ENCODE measurements at regions of chr5 and their contacts with region 1.

Region 1: DNA sequence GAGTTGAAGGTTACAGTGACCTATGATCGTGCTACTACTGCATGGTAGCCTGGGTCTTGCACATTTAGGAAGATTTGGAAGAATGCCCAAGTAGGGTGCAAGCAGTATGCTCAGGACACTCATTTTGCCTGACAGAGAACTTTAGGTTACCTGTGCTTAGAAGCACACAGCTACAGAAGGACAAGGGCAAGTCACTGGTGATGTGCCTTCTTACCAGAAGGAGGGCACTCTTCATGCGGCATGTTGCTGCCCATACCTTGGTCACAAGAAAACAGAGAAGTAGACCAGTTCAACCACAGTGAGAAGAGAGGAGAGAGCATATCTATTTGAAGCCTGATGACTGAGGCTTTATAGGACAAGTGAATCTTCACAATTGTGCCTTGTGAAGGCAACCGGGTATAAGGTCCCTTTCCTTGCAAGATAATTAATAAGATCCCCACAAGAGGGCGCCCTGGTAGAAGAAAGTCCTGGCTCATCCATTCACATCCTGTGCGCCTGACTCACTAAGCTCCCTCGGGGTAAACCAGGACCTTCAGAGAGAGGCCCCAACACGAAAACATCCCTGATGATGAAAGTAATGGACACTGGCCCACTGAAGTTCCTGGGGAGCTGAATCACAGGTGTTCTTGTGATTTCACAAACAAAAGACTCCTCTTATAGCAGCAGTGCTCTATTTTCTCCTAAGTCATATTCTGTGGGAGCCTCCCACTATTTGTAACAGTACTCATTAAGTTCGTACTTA is 38.1 kb upstream of the STARD4 start:
- DNase-seq: peak; percentile 78
- ATAC-seq: peak; percentile 94
- H3K4me3 Mint-ChIP-seq: no peak overlapping the region
- H3K27ac Mint-ChIP-seq: no peak overlapping the region
- H3K4me1 Mint-ChIP-seq: peaks cover 12% of the 10 kb centered on the region
- H3K27me3 Mint-ChIP-seq: peaks cover 13% of the 10 kb centered on the region

Region 2: DNA sequence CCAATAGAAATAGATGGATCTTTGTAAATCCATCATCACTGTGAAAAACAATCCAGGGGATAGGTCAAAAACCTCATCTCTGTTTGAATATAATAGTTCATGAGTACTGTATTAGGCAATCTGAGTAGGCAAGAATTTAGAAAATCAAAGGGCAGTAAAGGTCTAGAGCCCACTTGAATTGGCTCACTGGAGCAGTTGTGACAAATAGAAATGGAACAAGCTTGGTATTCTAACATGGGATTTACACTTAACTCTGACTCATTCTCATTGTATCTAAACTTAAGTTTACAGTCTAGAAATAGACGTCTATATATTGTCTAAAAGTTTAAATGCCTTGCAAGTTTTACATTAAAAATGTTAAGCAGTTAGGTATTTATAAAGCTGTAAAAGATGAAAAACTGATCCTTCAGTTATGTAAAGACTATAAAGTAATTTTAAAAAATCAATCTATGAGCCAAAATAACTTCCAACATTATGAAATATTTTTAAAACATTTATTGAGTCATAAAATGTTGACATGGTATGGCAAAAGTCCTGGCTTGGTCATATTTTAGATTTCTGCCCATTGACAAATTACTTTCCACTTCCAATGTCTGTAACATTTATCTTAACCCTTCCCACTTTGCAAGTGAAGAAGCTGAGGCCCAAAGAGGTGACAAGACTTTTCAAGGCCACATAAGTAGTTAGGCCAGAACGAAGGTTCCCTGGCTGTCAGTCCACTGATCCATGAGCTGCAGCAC is 410.2 kb after region 1 on chr5:
- CTCF ChIA-PET with region 1: no interaction called
- DNase-seq: no peak
- ATAC-seq: no peak
- H3K4me3 Mint-ChIP-seq: no peak overlapping the region
- H3K27ac Mint-ChIP-seq: no peak overlapping the region
- H3K4me1 Mint-ChIP-seq: no peaks in the 10 kb centered on the region
- H3K27me3 Mint-ChIP-seq: no peaks in the 10 kb centered on the region

Region 3: DNA sequence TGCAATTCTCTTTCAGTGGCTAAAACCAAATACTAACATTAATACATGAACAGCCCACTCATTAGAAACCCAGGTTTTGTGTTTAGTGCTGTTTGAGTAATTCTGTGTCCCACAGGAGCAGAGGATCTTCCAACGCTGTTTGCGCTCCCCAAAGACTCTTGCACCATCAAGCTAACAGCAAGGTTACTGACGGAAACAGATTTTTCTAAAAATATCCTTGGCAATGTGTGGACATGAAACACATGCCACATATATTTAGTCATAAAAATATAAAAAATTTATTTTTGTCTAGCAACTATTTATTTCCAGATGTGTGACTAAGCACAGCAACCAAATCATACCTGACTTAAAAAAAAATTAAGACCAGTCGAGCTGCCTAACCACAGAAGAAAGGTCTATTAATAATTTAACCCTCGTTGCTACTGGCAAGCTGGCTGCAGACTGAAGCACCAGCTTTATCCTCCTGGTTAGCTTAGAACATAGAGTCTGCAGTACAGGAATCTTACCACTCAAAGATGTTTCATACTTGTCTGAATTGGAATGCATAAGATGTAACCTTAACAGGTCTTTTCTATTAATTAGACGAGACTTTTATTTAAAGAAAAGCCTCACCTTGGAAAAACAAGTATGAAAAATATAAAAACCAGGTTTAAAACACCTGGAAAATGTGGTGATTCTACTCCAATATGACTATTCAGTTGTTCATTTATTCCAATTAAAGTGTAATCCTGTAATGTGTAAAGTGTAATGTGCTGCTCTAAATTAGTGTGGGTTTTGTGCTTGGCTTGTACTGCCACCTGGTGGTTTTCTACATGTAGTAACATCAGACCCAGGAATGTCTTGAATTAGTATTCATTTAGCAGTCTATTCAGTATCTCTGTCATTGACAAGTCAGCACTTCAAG is 596.1 kb after region 1 on chr5:
- CTCF ChIA-PET with region 1: interaction called, 15 read pairs
- DNase-seq: peak; percentile 70
- ATAC-seq: peak; percentile 90
- H3K4me3 Mint-ChIP-seq: no peak overlapping the region
- H3K27ac Mint-ChIP-seq: no peak overlapping the region
- H3K4me1 Mint-ChIP-seq: no peaks in the 10 kb centered on the region
- H3K27me3 Mint-ChIP-seq: peaks cover 5% of the 10 kb centered on the region

Measured in activated CD8-positive, alpha-beta memory T cell treated with anti-CD3 and anti-CD28 coated beads, Interleukin-2, amount 10 ng/mL, durations not matched to agents 7 days and 5 days (primary cell).